ENCODE measurements at regions of chr16 and their contacts with region 1.

Region 1: GRCh38 chr16:57341441-57342303 is 16.9 kb upstream of the CCL22 start:
- DNase-seq: no peak
- ATAC-seq: no peak
- H3K4me3 ChIP-seq: no peak overlapping the region
- H3K4me3 Mint-ChIP-seq: no peak overlapping the region
- H3K27ac ChIP-seq: no peak overlapping the region
- H3K27ac Mint-ChIP-seq: no peak overlapping the region
- H3K4me1 ChIP-seq: peaks cover 10% of the 10 kb centered on the region
- H3K4me1 Mint-ChIP-seq: peaks cover 12% of the 10 kb centered on the region
- H3K27me3 ChIP-seq: peaks cover 0 to 2% of the 10 kb centered on the region in 2 experiments
- H3K27me3 Mint-ChIP-seq: peaks cover 43% of the 10 kb centered on the region
- CTCF ChIP-seq: no peak

Region 2: GRCh38 chr16:57386381-57386951 is 44.8 kb after region 1 on chr16:
- CTCF ChIA-PET with region 1: no interaction called
- POLR2A ChIA-PET with region 1: no interaction called
- intact Hi-C with region 1: loop called in 1 of 2 experiments (anchors 5 kb)
- DNase-seq: no peak
- ATAC-seq: no peak
- H3K4me3 ChIP-seq: no peak overlapping the region
- H3K4me3 Mint-ChIP-seq: no peak overlapping the region
- H3K27ac ChIP-seq: no peak overlapping the region
- H3K27ac Mint-ChIP-seq: no peak overlapping the region
- H3K4me1 ChIP-seq: no peaks in the 10 kb centered on the region
- H3K4me1 Mint-ChIP-seq: peaks cover 3% of the 10 kb centered on the region
- H3K27me3 ChIP-seq: no peaks in the 10 kb centered on the region
- H3K27me3 Mint-ChIP-seq: no peaks in the 10 kb centered on the region
- CTCF ChIP-seq: no peak